GM12878 (cell line): ENCODE measurements at regions of chr3 and their contacts with region 1.

Region 1: GRCh38 chr3:151265866-151266265 is 12.5 kb downstream of the P2RY14 start:
- DNase-seq: peak; percentile 69
- ATAC-seq: peak; percentile 98
- H3K4me3 ChIP-seq: no peak overlapping the region
- H3K27ac ChIP-seq: no peak overlapping the region
- H3K4me1 ChIP-seq: peaks cover 7% of the 10 kb centered on the region; the same call in 1 of the 2 replicates
- H3K27me3 ChIP-seq: no peaks in the 10 kb centered on the region
- CTCF ChIP-seq: no peak
- EP300 ChIP-seq: peak; percentile 47 to 52; a peak in 3 of 4 replicates
- POLR2A ChIP-seq: no peak
- RAD21 ChIP-seq: no peak

Region 2: GRCh38 chr3:151276687-151277042 is 10.8 kb after region 1 on chr3:
- CTCF ChIA-PET with region 1: interaction called, 18 read pairs
- POLR2A ChIA-PET with region 1: no interaction called
- RAD21 ChIA-PET with region 1: interaction called, 9 read pairs
- SMC1A ChIA-PET with region 1: interaction called, 21 read pairs
- in situ Hi-C with region 1: no loop called
- intact Hi-C with region 1: no loop called
- DNase-seq: no peak
- ATAC-seq: peak; percentile 87
- H3K4me3 ChIP-seq: no peak overlapping the region; the same call in 1 of the 2 replicates
- H3K27ac ChIP-seq: no peak overlapping the region
- H3K4me1 ChIP-seq: peaks cover 36% of the 10 kb centered on the region
- H3K27me3 ChIP-seq: no peaks in the 10 kb centered on the region
- CTCF ChIP-seq: no peak
- EP300 ChIP-seq: no peak
- POLR2A ChIP-seq: no peak
- RAD21 ChIP-seq: no peak

Region 3: GRCh38 chr3:151362751-151363174 is 96.9 kb after region 1 on chr3:
- CTCF ChIA-PET with region 1: no interaction called
- POLR2A ChIA-PET with region 1: no interaction called
- RAD21 ChIA-PET with region 1: no interaction called
- SMC1A ChIA-PET with region 1: no interaction called
- in situ Hi-C with region 1: no loop called
- intact Hi-C with region 1: no loop called
- DNase-seq: no peak
- ATAC-seq: no peak
- H3K4me3 ChIP-seq: no peak overlapping the region
- H3K27ac ChIP-seq: no peak overlapping the region
- H3K4me1 ChIP-seq: no peaks in the 10 kb centered on the region
- H3K27me3 ChIP-seq: no peaks in the 10 kb centered on the region; a peak in 1 of 4 replicates
- CTCF ChIP-seq: no peak
- EP300 ChIP-seq: no peak
- POLR2A ChIP-seq: no peak
- RAD21 ChIP-seq: no peak

Region 4: GRCh38 chr3:151439652-151440129 is 173.8 kb after region 1 on chr3:
- CTCF ChIA-PET with region 1: no interaction called
- POLR2A ChIA-PET with region 1: no interaction called
- RAD21 ChIA-PET with region 1: no interaction called
- SMC1A ChIA-PET with region 1: no interaction called
- in situ Hi-C with region 1: no loop called
- intact Hi-C with region 1: no loop called
- DNase-seq: no peak
- ATAC-seq: peak; percentile 92
- H3K4me3 ChIP-seq: no peak overlapping the region
- H3K27ac ChIP-seq: no peak overlapping the region
- H3K4me1 ChIP-seq: no peaks in the 10 kb centered on the region
- H3K27me3 ChIP-seq: no peaks in the 10 kb centered on the region
- CTCF ChIP-seq: peak; percentile 63 to 70 (median 70)
- EP300 ChIP-seq: no peak
- POLR2A ChIP-seq: no peak
- RAD21 ChIP-seq: peak; percentile 68